Astrocyte of the cerebellum (primary cell): ENCODE measurements at regions of chr3 and their contacts with region 1.

Region 1: DNA sequence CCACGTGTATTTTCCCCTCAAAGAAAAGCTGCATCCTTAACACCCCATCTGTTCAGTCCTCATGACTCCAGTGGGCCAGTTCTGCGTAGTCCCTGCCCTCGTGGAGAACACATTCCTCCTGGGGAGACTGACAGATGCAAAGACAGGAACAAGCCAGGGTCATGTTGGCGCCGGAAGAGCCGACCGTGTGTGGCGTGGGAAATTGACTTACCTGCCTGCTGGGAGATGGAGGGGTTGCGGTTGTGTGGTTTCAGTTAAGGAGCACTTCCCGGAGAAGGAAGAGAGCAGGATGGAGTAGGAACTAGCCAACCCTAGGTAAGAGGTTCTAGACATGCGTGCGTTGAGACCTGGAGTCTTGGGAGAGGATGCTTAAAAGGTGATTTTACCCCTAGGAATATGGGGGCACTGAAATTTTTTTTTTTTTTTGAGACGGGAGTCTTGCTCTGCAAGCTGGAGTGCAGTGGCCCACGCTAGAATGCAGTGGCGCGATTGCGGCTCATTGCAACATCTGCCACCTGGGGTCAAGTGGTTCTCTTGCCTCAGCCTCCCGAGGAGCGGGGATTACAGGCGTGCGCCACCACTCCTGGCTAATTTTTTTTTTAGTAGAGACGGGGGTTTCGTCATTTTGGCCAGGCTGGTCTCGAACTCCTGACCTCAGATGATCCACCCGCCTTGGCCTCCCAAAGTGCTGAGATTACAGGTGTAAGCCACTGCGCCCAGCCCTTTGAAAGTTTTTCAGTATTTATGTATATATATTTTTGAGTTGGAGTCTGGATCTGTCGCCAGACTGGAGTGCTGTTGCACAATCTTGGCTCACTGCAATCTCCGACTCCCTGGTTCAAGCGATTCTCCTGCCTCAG is 1.4 kb downstream of the VHL start:
- DNase-seq: no peak
- H3K4me3 ChIP-seq: peak overlapping the region; percentile 61
- CTCF ChIP-seq: no peak

Region 2: GRCh38 chr3:10205451-10206165 is 62.7 kb after region 1 on chr3:
- in situ Hi-C with region 1: loop called (anchors 10 kb)
- DNase-seq: peak; percentile 84
- H3K4me3 ChIP-seq: no peak overlapping the region
- CTCF ChIP-seq: peak; percentile 35